Keratinocyte (primary cell): ENCODE measurements at regions of chr12 and their contacts with region 1.

Region 1: GRCh38 chr12:85866986-85867776 is 6.9 kb upstream of the NTS start:
- DNase-seq: peak; percentile 30
- H3K4me3 ChIP-seq: peak overlapping the region in 1 of 3 experiments; percentile 47
- H3K27ac ChIP-seq: peak overlapping the region; percentile 15
- H3K4me1 ChIP-seq: peaks cover 10% of the 10 kb centered on the region
- H3K27me3 ChIP-seq: no peaks in the 10 kb centered on the region
- CTCF ChIP-seq: peak; percentile 57 to 71 (median 60)

Region 2: GRCh38 chr12:85484387-85484786 is 382.8 kb before region 1 on chr12:
- dilution Hi-C with region 1: loop called (anchors 25 kb)
- DNase-seq: no peak
- H3K4me3 ChIP-seq: no peak overlapping the region
- H3K27ac ChIP-seq: no peak overlapping the region
- H3K4me1 ChIP-seq: no peaks in the 10 kb centered on the region
- H3K27me3 ChIP-seq: no peaks in the 10 kb centered on the region
- CTCF ChIP-seq: no peak

Region 3: GRCh38 chr12:85708775-85709174 is 158.4 kb before region 1 on chr12:
- dilution Hi-C with region 1: no loop called
- DNase-seq: no peak
- H3K4me3 ChIP-seq: no peak overlapping the region
- H3K27ac ChIP-seq: no peak overlapping the region
- H3K4me1 ChIP-seq: no peaks in the 10 kb centered on the region
- H3K27me3 ChIP-seq: no peaks in the 10 kb centered on the region
- CTCF ChIP-seq: no peak

Region 4: DNA sequence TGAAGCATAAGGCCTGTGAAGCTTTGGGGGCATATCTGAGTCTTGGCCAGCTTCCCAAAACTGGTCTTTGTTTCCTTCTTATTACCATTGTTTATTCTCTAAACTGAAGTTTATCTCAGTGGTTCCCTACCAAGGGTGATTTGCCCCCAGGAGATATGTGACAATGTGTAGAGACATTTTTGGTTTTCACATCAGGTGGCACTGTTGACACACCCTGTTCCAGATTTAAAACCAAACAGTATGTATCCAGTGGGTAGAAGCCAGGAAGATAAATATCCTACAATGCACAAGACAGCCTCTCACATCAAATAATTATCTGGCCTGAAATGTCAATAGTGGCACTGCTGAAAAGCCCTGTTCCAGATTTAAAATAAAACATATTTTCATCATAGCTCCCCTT is 53.1 kb before region 1 on chr12:
- dilution Hi-C with region 1: no loop called
- DNase-seq: no peak
- H3K4me3 ChIP-seq: no peak overlapping the region
- H3K27ac ChIP-seq: no peak overlapping the region
- H3K4me1 ChIP-seq: peaks cover 3% of the 10 kb centered on the region
- H3K27me3 ChIP-seq: no peaks in the 10 kb centered on the region
- CTCF ChIP-seq: no peak